ENCODE measurements at regions of chr6 and their contacts with region 1.

Region 1: DNA sequence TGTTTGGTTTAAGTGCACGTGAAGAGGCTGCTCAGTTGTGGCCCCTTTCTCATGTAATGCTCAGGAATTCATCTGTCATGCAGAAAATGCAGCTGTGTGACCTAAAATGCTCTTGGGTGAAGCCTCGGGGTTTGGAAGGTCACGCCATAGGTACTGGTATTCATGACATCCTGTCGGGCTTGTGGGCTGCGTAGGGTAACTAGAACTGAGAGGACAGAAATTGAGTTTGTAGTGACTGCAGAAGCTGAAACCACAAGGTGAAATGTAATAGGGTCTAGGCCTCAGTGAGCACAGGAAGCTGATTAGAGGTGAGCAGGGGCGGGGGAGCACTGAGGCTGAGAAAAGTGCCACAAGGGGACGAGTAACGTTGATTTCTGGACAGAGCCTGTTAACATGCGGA is 128.8 kb downstream of the SOBP start:
- DNase-seq: peak; percentile 96
- H3K4me3 ChIP-seq: peak overlapping the region; percentile 56
- H3K27ac ChIP-seq: peak overlapping the region; percentile 98
- H3K4me1 ChIP-seq: peaks cover 94% of the 10 kb centered on the region
- CTCF ChIP-seq: no peak

Region 2: GRCh38 chr6:107550241-107550840 is 68.3 kb before region 1 on chr6:
- CTCF ChIA-PET with region 1: no interaction called
- POLR2A ChIA-PET with region 1: interaction called, 7 read pairs
- intact Hi-C with region 1: loop called (anchors 5 kb)
- DNase-seq: peak; percentile 87
- H3K4me3 ChIP-seq: peak overlapping the region; percentile 49
- H3K27ac ChIP-seq: peak overlapping the region; percentile 91
- H3K4me1 ChIP-seq: peaks cover 35% of the 10 kb centered on the region
- CTCF ChIP-seq: no peak

Region 3: GRCh38 chr6:107633680-107634323 is 15.1 kb after region 1 on chr6:
- CTCF ChIA-PET with region 1: interaction called, 4 read pairs
- POLR2A ChIA-PET with region 1: interaction called, 38 read pairs
- intact Hi-C with region 1: no loop called
- DNase-seq: no peak
- H3K4me3 ChIP-seq: no peak overlapping the region
- H3K27ac ChIP-seq: no peak overlapping the region
- H3K4me1 ChIP-seq: peaks cover 10% of the 10 kb centered on the region
- CTCF ChIP-seq: no peak

Region 4: DNA sequence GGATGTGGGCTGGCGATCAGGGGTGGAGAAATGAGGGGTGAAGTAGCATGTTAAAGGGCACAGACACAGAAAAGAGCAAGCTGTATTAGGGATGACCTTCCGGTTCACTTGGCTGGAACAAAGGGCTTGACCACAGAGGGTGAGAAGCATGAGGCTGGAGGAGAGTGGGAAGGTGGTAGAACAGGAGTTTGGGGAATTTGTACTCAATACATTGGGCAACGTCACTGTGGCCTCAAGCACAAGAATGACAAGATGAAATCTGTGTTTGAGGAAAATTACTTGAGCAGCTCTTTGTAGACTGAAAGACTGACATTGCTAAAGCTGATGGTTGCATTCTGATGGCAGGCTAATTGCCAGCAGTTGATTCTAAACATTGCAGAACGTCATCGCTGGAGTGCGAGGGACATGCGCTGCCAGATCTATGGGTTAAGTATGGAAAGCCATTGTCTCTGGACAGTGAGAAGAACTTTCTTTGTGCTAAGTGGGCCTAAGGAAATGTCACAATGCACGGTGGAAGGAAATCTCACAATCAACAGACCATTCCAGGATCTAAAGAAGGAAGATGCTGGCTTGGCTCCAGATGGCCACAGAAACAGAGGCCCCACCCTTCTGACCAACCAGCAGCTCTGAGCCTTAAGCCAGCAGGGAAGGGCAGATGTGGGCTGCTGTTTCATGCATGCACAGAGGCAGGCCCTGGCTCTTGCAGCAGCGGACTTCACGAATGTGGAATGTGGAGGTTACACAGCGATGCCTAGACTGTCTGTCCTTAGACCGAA is 27.3 kb after region 1 on chr6:
- CTCF ChIA-PET with region 1: interaction called, 4 read pairs
- POLR2A ChIA-PET with region 1: interaction called, 22 read pairs
- intact Hi-C with region 1: loop called (anchors 1 kb)
- DNase-seq: no peak
- H3K4me3 ChIP-seq: no peak overlapping the region
- H3K27ac ChIP-seq: no peak overlapping the region
- H3K4me1 ChIP-seq: peaks cover 77% of the 10 kb centered on the region
- CTCF ChIP-seq: no peak

Measured in OCI-LY7 (cell line).